Body of pancreas (tissue), 4 donors: ENCODE measurements at regions of chr3 and their contacts with region 1.

Region 1: DNA sequence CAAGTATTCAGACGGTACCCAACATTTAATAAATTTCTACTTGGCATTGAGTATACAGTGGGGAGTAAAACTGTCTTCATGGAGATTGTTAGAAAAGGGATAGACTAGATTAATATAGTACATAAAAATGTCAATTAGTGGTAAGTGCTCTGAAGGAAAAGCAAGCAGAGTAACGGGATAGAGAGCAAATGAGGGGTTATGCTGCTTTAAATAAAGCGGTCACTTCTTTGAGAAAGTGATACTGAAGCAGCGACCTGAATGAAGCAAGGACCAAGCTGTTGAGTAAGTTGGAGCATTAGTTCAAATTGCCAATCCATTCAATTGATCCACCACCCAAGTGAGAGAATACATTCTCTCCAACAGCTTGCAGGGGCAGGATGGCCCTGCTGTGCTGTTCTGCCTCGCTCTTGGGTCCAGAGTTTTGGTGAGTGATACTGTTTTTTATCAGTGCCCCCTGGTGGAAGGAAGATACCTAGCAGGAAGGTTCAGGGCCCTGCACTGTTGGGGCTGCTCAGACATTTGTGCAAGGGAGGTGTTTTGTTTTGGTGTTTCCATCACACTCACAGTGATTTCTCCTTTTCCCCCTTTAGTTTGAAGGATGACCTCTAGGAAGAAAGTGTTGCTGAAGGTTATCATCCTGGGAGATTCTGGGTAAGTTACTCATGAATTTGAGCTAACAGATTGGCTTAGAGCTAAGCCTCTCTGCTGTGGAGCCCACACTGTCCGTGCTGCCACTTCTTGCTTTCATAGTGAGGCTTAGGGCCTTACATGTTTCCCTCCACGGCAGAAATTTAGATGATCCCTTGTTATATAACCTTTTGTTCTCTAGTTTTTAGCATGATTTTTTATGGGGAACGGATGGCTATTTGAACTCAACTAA is 69.0 kb downstream of the RAB7A start:
- DNase-seq: peak; percentile 55 to 71 (median 63)
- ATAC-seq: peak; percentile 92
- H3K4me3 ChIP-seq: no peak overlapping the region
- H3K27ac ChIP-seq: no peak overlapping the region
- H3K4me1 ChIP-seq: peaks cover 21% of the 10 kb centered on the region
- H3K27me3 ChIP-seq: no peaks in the 10 kb centered on the region
- CTCF ChIP-seq: peak; percentile 59 to 81 (median 72)
- POLR2A ChIP-seq: no peak

Region 2: GRCh38 chr3:128680602-128681368 is 114.2 kb before region 1 on chr3:
- intact Hi-C with region 1: loop called (anchors 5 kb)
- DNase-seq: peak; percentile 99 to 100 (median 99)
- ATAC-seq: peak; percentile 99
- H3K4me3 ChIP-seq: peak overlapping the region; percentile 30 to 33
- H3K27ac ChIP-seq: peak overlapping the region; percentile 92 to 98 (median 92)
- H3K4me1 ChIP-seq: peaks cover 14% of the 10 kb centered on the region
- H3K27me3 ChIP-seq: no peaks in the 10 kb centered on the region
- CTCF ChIP-seq: peak; percentile 95 to 100 (median 99)
- POLR2A ChIP-seq: peak; percentile 76 to 96 (median 96)

Region 3: GRCh38 chr3:128993461-128994173 is 198.6 kb after region 1 on chr3 and contains the start of gene CFAP92:
- intact Hi-C with region 1: no loop called
- DNase-seq: peak; percentile 91 to 94 (median 93)
- ATAC-seq: peak; percentile 97
- H3K4me3 ChIP-seq: no peak within 1 kb of the TSS
- H3K27ac ChIP-seq: peak within 1 kb of the TSS in 1 of 4 donors; percentile 34
- H3K4me1 ChIP-seq: peaks cover 17% of the 10 kb centered on the region
- H3K27me3 ChIP-seq: no peaks in the 10 kb centered on the region
- CTCF ChIP-seq: no peak
- POLR2A ChIP-seq: peak in 2 of 3 donors; percentile 48 to 50
- total RNA-seq, gene CFAP92: not detected